Psoas muscle (tissue), 8 donors: ENCODE measurements at regions of chr1 and their contacts with region 1.

Region 1: DNA sequence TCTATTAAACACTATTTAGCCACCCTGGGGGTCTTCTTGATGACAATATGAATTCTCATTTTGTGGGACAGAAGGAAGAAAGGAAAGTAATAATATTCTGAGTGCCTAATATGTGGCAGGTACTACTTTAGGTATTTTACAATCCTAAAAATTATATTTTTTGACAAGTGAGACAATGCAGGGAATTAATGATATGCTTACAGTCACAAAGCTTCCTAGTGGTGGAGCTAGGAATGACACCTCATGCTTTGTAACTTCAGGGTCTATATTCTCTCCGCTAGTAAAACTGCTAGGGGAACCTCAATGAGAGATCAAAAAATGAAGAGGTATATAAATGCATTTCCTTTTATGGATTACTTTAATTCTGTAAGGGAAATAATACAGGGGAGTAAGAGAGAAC is 44.3 kb downstream of the TPR start:
- DNase-seq: no peak
- ATAC-seq: no peak
- H3K4me3 ChIP-seq: no peak overlapping the region
- H3K27ac ChIP-seq: no peak overlapping the region
- H3K4me1 ChIP-seq: no peaks in the 10 kb centered on the region
- H3K27me3 ChIP-seq: no peaks in the 10 kb centered on the region
- CTCF ChIP-seq: peak; percentile 13

Region 2: GRCh38 chr1:186042216-186042615 is 288.5 kb before region 1 on chr1:
- intact Hi-C with region 1: no loop called
- DNase-seq: no peak
- ATAC-seq: no peak
- H3K4me3 ChIP-seq: no peak overlapping the region
- H3K27ac ChIP-seq: no peak overlapping the region
- H3K4me1 ChIP-seq: no peaks in the 10 kb centered on the region
- H3K27me3 ChIP-seq: no peaks in the 10 kb centered on the region
- CTCF ChIP-seq: no peak

Region 3: DNA sequence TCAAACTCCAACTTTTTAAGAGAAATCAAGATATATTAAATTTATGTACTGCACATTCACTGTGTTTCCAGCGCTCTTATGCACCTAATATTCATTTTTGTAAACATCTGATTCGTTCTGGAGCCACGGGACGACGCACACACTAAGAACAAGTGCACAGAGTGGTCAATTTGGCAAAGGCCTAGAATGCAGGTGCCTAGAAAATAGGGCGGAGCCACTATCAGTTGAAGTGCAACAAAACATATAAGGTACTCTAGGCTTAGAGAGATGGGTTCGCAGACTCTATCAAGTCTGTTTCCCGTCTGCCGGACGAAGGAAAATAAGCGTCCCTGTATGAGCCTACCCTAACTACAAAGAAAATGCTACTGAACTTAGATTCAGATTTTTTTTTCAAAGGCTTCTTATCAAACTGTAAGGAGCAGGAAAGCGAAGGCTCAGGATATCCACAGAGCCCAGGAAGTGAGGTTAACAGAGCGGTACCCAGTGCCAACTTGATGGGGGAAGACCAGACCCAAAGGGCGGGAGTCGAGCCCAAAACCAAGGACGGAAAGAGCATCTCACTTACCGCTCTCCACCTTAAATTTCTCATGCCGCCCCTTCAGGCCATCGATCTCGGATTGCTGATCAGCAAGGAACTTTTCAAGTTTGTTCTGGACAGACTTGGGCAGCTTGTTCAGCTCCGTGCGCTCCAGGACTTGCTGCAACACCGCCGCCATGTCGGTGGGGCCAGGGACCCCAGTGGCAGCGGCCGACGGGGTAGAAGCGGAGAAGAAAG is 43.7 kb after region 1 on chr1:
- intact Hi-C with region 1: loop called in 1 of 2 experiments (anchors 5 kb)
- DNase-seq: no peak
- ATAC-seq: peak in 1 of 4 donors; percentile 28
- H3K4me3 ChIP-seq: peak overlapping the region; percentile 85
- H3K27ac ChIP-seq: peak overlapping the region; percentile 97
- H3K4me1 ChIP-seq: peaks cover 29% of the 10 kb centered on the region
- H3K27me3 ChIP-seq: no peaks in the 10 kb centered on the region
- CTCF ChIP-seq: no peak

Region 4: GRCh38 chr1:186393476-186393875 is 62.7 kb after region 1 on chr1:
- intact Hi-C with region 1: loop called in 1 of 2 experiments (anchors 5 kb)
- DNase-seq: no peak
- ATAC-seq: no peak
- H3K4me3 ChIP-seq: no peak overlapping the region
- H3K27ac ChIP-seq: no peak overlapping the region
- H3K4me1 ChIP-seq: no peaks in the 10 kb centered on the region
- H3K27me3 ChIP-seq: no peaks in the 10 kb centered on the region
- CTCF ChIP-seq: no peak

Region 5: DNA sequence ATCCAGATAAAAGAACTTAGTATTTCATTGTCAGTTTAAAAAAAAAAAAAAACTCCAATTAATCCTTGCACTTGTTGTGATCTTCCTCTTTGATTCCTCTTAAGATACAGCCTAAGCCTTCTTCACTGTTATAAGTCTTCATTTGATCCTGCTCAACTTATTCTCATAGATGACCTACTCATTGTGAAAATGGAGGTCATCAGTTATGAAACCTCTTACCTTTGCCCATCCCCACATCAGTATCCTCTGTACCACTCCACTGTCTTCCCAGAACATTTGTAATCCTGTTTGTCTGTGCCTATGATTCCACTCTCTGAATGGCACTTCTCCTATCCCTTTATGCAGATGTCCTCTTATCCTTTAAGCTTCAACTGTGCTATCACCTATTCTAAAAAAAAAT is 72.9 kb after region 1 on chr1:
- intact Hi-C with region 1: no loop called
- DNase-seq: no peak
- ATAC-seq: no peak
- H3K4me3 ChIP-seq: no peak overlapping the region
- H3K27ac ChIP-seq: no peak overlapping the region
- H3K4me1 ChIP-seq: no peaks in the 10 kb centered on the region
- H3K27me3 ChIP-seq: no peaks in the 10 kb centered on the region
- CTCF ChIP-seq: no peak